Aorta (tissue), 5 donors: ENCODE measurements at regions of chr10 and their contacts with region 1.

Region 1: GRCh38 chr10:23067939-23068775 is 27.2 kb upstream of the MSRB2 start:
- DNase-seq: peak; percentile 81 to 91
- ATAC-seq: peak; percentile 84
- H3K4me3 ChIP-seq: no peak overlapping the region
- H3K27ac ChIP-seq: peak overlapping the region in 1 of 2 donors; percentile 23
- H3K4me1 ChIP-seq: peaks cover 0 to 4% of the 10 kb centered on the region in 2 donors
- H3K27me3 ChIP-seq: no peaks in the 10 kb centered on the region

Region 2: DNA sequence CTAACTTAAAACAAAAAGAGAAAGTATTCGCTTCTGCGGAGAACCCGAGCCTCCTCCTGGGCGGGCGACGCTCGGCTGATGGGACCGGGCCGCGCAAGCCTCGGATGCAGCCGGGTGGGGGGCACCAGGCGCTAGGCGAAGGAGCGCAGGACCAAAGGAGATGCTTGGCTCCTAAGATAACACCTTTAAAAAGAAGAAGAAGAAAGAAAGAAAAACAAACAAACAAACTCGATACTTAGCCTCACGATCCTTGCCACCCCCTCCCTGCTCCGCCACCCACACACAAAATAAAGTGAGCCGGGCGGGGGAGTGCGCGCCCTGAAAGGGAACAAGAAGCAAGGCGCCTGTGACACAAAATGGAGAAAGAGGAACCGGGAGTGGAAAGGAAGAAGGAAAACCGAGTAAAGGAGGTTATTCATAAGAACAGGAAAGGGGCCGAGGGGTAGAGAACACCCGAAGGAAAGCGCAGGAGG is 816.4 kb before region 1 on chr10:
- intact Hi-C with region 1: loop called in 1 of 2 experiments (anchors 10 kb)
- DNase-seq: peak; percentile 81 to 83
- ATAC-seq: peak; percentile 78
- H3K4me3 ChIP-seq: peak overlapping the region; percentile 65 to 80
- H3K27ac ChIP-seq: peak overlapping the region; percentile 92 to 93
- H3K4me1 ChIP-seq: no peaks in the 10 kb centered on the region
- H3K27me3 ChIP-seq: no peaks in the 10 kb centered on the region

Region 3: GRCh38 chr10:22340362-22341189 is 727.6 kb before region 1 on chr10:
- intact Hi-C with region 1: loop called in 1 of 2 experiments (anchors 10 kb)
- DNase-seq: peak; percentile 81 to 90
- ATAC-seq: peak; percentile 90
- H3K4me3 ChIP-seq: peak overlapping the region; percentile 83 to 94
- H3K27ac ChIP-seq: peak overlapping the region; percentile 73 to 77
- H3K4me1 ChIP-seq: no peaks in the 10 kb centered on the region
- H3K27me3 ChIP-seq: peaks cover 0 to 2% of the 10 kb centered on the region in 2 donors

Region 4: GRCh38 chr10:22550732-22551131 is 517.4 kb before region 1 on chr10:
- intact Hi-C with region 1: loop called in 1 of 2 experiments (anchors 10 kb)
- DNase-seq: peak in 1 of 2 donors; percentile 82
- ATAC-seq: no peak
- H3K4me3 ChIP-seq: no peak overlapping the region
- H3K27ac ChIP-seq: no peak overlapping the region
- H3K4me1 ChIP-seq: peaks cover 2 to 3% of the 10 kb centered on the region in 2 donors
- H3K27me3 ChIP-seq: no peaks in the 10 kb centered on the region

Region 5: GRCh38 chr10:22714479-22715289 is 353.5 kb before region 1 on chr10 and contains the start of gene PIP4K2A:
- intact Hi-C with region 1: loop called (anchors 5 to 10 kb)
- DNase-seq: peak; percentile 86 to 91
- ATAC-seq: peak; percentile 85
- H3K4me3 ChIP-seq: peak within 1 kb of the TSS; percentile 73 to 96
- H3K27ac ChIP-seq: peak within 1 kb of the TSS; percentile 52 to 91
- H3K4me1 ChIP-seq: peaks cover 0 to 3% of the 10 kb centered on the region in 2 donors
- H3K27me3 ChIP-seq: no peaks in the 10 kb centered on the region
- total RNA-seq, gene PIP4K2A: 77.9 to 90.3 TPM

Region 6: GRCh38 chr10:22927661-22928403 is 140.3 kb before region 1 on chr10 and contains the start of gene ARMC3:
- intact Hi-C with region 1: no loop called
- DNase-seq: peak; percentile 76 to 88
- ATAC-seq: peak; percentile 83
- H3K4me3 ChIP-seq: peak within 1 kb of the TSS in 1 of 2 donors; percentile 12
- H3K27ac ChIP-seq: no peak within 1 kb of the TSS
- H3K4me1 ChIP-seq: peaks cover 0 to under 1% of the 10 kb centered on the region in 2 donors
- H3K27me3 ChIP-seq: no peaks in the 10 kb centered on the region
- total RNA-seq, gene ARMC3: not detected

Region 7: GRCh38 chr10:23015021-23015707 is 53.0 kb before region 1 on chr10:
- intact Hi-C with region 1: loop called in 1 of 2 experiments (anchors 5 kb)
- DNase-seq: no peak
- ATAC-seq: no peak
- H3K4me3 ChIP-seq: no peak overlapping the region
- H3K27ac ChIP-seq: no peak overlapping the region
- H3K4me1 ChIP-seq: no peaks in the 10 kb centered on the region
- H3K27me3 ChIP-seq: no peaks in the 10 kb centered on the region

Region 8: DNA sequence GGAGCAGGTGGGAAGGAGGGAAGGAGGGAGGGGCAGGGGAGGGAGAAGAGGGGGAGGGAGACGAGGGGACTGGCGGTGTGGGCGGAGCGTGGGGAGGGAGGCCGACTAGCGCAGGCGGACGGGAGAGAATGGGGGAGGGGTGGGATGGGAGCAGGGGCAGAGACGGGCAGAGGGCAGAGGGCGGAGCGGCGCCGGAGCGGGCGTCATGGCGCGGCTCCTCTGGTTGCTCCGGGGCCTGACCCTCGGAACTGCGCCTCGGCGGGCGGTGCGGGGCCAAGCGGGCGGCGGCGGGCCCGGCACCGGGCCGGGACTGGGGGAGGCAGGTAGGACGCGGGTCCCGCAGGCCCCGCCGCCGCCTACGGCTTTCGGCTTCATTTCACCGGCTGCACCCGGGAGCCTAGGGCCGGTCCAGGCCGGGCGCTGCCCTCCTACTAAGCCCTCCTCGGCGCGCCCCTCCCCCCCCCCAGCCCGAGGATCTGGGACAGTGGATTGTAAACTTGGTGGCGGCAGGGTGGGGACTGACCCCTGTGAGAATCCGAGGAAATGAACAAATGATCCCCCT is 27.3 kb after region 1 on chr10 and contains the start of gene MSRB2:
- intact Hi-C with region 1: loop called in 1 of 2 experiments (anchors 2 kb)
- DNase-seq: peak; percentile 96 to 97
- ATAC-seq: peak; percentile 94
- H3K4me3 ChIP-seq: peak within 1 kb of the TSS; percentile 62 to 85
- H3K27ac ChIP-seq: peak within 1 kb of the TSS; percentile 68 to 89
- H3K4me1 ChIP-seq: no peaks in the 10 kb centered on the region
- H3K27me3 ChIP-seq: no peaks in the 10 kb centered on the region
- total RNA-seq, gene MSRB2: 30.4 to 34.5 TPM